GM12878 (cell line): ENCODE measurements at regions of chr2 and their contacts with region 1.

Region 1: DNA sequence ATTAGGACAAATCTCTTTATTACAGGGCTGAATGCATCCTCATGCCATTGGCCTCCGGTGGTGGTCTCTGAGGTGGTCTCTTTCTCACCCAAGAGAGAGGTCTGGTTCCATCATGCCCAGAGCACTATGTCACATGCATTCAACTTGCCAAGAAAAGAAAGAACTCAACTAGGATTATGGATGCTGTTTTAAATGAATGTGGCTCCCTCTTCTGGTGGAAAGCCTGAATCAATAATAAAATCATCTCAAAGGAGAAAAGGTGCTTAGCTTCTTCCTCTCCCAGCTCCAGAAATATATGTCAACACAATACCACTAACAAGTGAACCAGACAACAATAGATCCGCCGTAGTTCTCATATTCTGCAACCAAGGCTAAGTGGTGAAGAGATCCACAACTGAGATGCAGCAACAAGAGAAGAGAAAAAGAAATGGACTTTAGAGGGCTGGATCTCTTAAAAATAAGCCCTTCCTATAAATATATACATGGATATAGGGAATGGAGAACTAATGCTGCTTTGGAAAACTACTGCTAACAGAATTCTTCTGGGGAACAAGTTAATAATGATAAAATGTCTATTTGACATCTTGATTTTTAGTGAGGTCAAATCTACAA is 396.8 kb downstream of the NCKAP5 start:
- DNase-seq: peak; percentile 3
- ATAC-seq: peak; percentile 72
- H3K4me3 ChIP-seq: no peak overlapping the region
- H3K27ac ChIP-seq: no peak overlapping the region
- H3K4me1 ChIP-seq: no peaks in the 10 kb centered on the region
- H3K27me3 ChIP-seq: no peaks in the 10 kb centered on the region; a peak in 2 of 4 replicates
- CTCF ChIP-seq: peak; percentile 36 to 72 (median 39); a peak in 5 of 6 replicates
- EP300 ChIP-seq: no peak
- POLR2A ChIP-seq: no peak
- RAD21 ChIP-seq: peak; percentile 75

Region 2: GRCh38 chr2:132256251-132256902 is 915.1 kb before region 1 on chr2:
- CTCF ChIA-PET with region 1: no interaction called
- POLR2A ChIA-PET with region 1: no interaction called
- RAD21 ChIA-PET with region 1: no interaction called
- SMC1A ChIA-PET with region 1: no interaction called
- in situ Hi-C with region 1: loop called (anchors 25 kb)
- intact Hi-C with region 1: no loop called
- DNase-seq: no peak
- ATAC-seq: no peak
- H3K4me3 ChIP-seq: no peak overlapping the region
- H3K27ac ChIP-seq: no peak overlapping the region
- H3K4me1 ChIP-seq: no peaks in the 10 kb centered on the region
- H3K27me3 ChIP-seq: no peaks in the 10 kb centered on the region
- CTCF ChIP-seq: no peak
- EP300 ChIP-seq: no peak
- POLR2A ChIP-seq: no peak
- RAD21 ChIP-seq: no peak

Region 3: DNA sequence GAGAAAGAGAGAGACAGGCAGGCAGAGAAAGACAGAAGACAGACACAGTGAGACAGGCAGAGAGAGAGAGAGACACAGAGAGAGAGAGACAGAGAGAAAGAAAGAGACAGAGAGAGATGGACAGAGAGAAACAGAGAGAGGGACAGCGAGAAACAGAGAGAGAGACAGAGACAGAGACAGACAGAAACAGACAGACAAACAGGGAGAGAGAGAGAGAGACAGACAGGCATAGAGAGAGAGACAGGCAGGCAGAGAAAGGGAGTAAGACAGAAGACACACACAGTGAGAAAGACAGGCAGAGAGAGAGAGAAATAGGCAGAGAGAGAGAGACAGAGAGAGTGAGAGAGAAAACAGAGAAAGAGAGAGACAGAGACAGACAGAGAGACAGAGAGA is 904.4 kb before region 1 on chr2:
- CTCF ChIA-PET with region 1: interaction called, 4 read pairs
- POLR2A ChIA-PET with region 1: no interaction called
- RAD21 ChIA-PET with region 1: no interaction called
- SMC1A ChIA-PET with region 1: no interaction called
- in situ Hi-C with region 1: loop called (anchors 25 kb)
- intact Hi-C with region 1: loop called (anchors 5 kb)
- DNase-seq: no peak
- ATAC-seq: peak; percentile 30
- H3K4me3 ChIP-seq: no peak overlapping the region
- H3K27ac ChIP-seq: no peak overlapping the region
- H3K4me1 ChIP-seq: no peaks in the 10 kb centered on the region
- H3K27me3 ChIP-seq: no peaks in the 10 kb centered on the region
- CTCF ChIP-seq: no peak
- EP300 ChIP-seq: no peak
- POLR2A ChIP-seq: no peak
- RAD21 ChIP-seq: no peak

Region 4: DNA sequence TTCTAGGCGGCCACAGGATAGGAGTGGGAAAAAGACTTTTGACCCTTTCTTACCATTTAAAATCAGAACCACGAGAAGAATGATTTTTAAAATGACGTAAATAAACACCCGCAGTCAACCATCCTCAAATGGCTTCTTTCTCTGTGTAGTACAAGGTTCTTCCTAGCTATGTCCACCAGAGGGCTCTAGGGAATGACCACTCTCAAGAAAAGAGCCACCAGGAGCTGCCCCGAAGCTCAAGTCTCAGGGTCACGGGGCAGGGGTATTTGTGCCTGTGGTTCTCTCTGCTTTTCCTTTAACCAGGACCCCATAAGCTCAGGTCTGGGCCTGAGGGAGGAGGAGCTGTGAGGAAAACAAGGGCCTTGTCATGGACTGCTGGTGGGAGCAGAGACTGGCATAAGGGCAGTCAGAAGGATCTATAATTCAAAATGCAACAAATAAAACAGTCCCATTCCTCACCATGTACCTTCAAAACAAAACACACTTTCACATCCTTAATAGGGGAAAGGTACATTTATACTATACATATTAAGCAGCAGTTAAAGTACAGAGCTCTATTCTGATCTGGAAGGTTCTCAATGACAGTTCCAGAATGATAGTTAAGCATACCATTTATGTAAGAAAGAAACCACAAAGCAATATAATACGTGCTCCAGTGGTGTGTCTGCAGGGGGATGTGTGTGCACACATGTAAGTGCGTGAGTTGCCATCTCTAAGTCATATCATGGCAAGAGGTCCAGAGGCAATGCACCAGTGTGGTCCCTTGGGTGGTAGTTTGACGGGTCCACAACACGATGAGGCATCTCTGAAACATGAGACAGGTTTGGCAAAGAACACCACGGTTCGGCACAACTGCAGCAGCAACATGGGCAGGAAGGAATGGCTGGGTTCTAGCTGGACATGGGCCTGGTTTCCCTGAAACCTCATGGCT is 520.1 kb before region 1 on chr2:
- CTCF ChIA-PET with region 1: interaction called, 19 read pairs
- POLR2A ChIA-PET with region 1: no interaction called
- RAD21 ChIA-PET with region 1: interaction called, 12 read pairs
- SMC1A ChIA-PET with region 1: interaction called, 13 read pairs
- in situ Hi-C with region 1: no loop called
- intact Hi-C with region 1: loop called (anchors 1 kb)
- DNase-seq: no peak
- ATAC-seq: peak; percentile 83
- H3K4me3 ChIP-seq: no peak overlapping the region
- H3K27ac ChIP-seq: no peak overlapping the region
- H3K4me1 ChIP-seq: no peaks in the 10 kb centered on the region
- H3K27me3 ChIP-seq: no peaks in the 10 kb centered on the region; a peak in 1 of 4 replicates
- CTCF ChIP-seq: peak in 2 of 3 experiments; percentile 38 to 50; a peak in 3 of 6 replicates
- EP300 ChIP-seq: no peak
- POLR2A ChIP-seq: no peak
- RAD21 ChIP-seq: no peak

Region 5: GRCh38 chr2:132670496-132671150 is 500.9 kb before region 1 on chr2:
- CTCF ChIA-PET with region 1: interaction called, 26 read pairs
- POLR2A ChIA-PET with region 1: no interaction called
- RAD21 ChIA-PET with region 1: interaction called, 9 read pairs
- SMC1A ChIA-PET with region 1: interaction called, 3 read pairs
- in situ Hi-C with region 1: no loop called
- intact Hi-C with region 1: loop called (anchors 5 kb)
- DNase-seq: no peak
- ATAC-seq: peak; percentile 49
- H3K4me3 ChIP-seq: no peak overlapping the region
- H3K27ac ChIP-seq: no peak overlapping the region
- H3K4me1 ChIP-seq: no peaks in the 10 kb centered on the region
- H3K27me3 ChIP-seq: peaks cover 5 to 6% of the 10 kb centered on the region in 2 experiments
- CTCF ChIP-seq: 0 out of 6 replicates have a peak, but pooled peaks of 1 of the 3 experiments have one; percentile 2
- EP300 ChIP-seq: no peak
- POLR2A ChIP-seq: no peak
- RAD21 ChIP-seq: no peak

Region 6: DNA sequence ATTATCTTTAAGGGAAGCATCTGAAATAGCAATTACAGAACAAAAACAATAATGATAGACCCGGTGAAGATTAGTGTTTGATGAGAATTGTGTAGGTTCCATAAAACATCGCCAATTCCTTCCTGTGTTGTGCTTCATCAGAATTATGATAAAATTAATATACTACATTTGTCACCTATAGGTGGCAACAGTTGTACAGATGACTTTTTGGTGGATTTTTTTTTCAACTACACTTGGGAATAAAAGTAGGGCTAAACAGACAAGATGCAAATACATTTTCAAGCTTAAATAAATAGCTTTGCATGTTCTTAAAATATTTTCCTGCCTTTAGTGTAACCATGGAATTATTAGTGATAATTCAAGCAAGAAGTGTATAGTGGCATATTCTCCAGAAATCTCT is 494.5 kb before region 1 on chr2:
- CTCF ChIA-PET with region 1: interaction called, 26 read pairs
- POLR2A ChIA-PET with region 1: no interaction called
- RAD21 ChIA-PET with region 1: interaction called, 9 read pairs
- SMC1A ChIA-PET with region 1: interaction called, 11 read pairs
- in situ Hi-C with region 1: no loop called
- intact Hi-C with region 1: loop called (anchors 5 kb)
- DNase-seq: no peak
- ATAC-seq: no peak
- H3K4me3 ChIP-seq: no peak overlapping the region
- H3K27ac ChIP-seq: no peak overlapping the region
- H3K4me1 ChIP-seq: no peaks in the 10 kb centered on the region
- H3K27me3 ChIP-seq: no peaks in the 10 kb centered on the region; a peak in 1 of 4 replicates
- CTCF ChIP-seq: peak in 2 of 3 experiments; percentile 16 to 34; a peak in 2 of 6 replicates
- EP300 ChIP-seq: no peak
- POLR2A ChIP-seq: no peak
- RAD21 ChIP-seq: 0 out of 2 replicates have a peak, but pooled peaks have one; percentile 16